ENCODE measurements at regions of chr6 and their contacts with region 1.

Region 1: GRCh38 chr6:69105288-69105687 is 470.2 kb downstream of the ADGRB3 start:
- DNase-seq: peak in 1 of 2 experiments; percentile 25
- H3K4me3 ChIP-seq: no peak overlapping the region
- H3K4me3 Mint-ChIP-seq: no peak overlapping the region
- H3K27ac Mint-ChIP-seq: peak overlapping the region; percentile 64
- H3K4me1 ChIP-seq: peaks cover 17% of the 10 kb centered on the region
- H3K4me1 Mint-ChIP-seq: peaks cover 7% of the 10 kb centered on the region
- H3K27me3 ChIP-seq: no peaks in the 10 kb centered on the region
- H3K27me3 Mint-ChIP-seq: no peaks in the 10 kb centered on the region
- CTCF ChIP-seq: no peak

Region 2: DNA sequence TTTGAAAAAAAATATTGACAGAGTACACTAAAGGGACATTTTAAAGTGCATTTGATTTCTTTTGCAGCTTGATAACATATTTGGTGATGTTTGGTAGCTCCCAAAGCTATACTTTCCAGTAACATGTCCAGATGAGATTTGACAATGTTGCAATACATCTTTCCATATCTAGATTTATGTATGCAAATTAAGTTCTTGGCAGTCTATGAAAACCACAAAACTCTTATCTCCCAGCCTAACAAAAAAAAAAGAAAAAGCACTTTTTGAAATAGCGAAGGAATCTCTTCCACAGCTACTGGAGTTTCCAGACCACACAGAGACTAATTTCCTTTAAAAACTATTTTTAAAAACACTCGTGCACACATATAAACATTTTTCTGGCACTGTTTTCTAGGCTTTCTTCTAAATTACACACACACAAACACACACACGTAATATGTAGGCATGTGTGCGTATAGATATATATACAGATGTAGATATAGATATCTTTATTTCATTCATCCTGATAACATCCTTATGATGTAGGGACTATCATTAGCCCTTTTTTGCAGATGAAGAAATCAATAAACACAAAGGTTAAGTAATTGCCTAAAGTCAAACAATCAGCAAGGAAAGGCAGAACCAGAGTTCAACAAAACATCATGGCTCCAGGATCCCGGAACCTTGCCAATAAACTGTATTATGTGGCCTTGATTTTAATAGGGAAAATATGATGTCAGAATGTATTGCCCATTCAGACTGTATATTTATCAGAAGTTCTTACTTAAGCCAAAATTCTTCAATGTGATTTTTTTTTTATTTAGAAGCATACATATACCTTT is 376.9 kb before region 1 on chr6:
- CTCF ChIA-PET with region 1: no interaction called
- POLR2A ChIA-PET with region 1: no interaction called
- intact Hi-C with region 1: no loop called
- DNase-seq: no peak
- H3K4me3 ChIP-seq: no peak overlapping the region
- H3K4me3 Mint-ChIP-seq: no peak overlapping the region
- H3K27ac Mint-ChIP-seq: no peak overlapping the region
- H3K4me1 ChIP-seq: no peaks in the 10 kb centered on the region
- H3K4me1 Mint-ChIP-seq: no peaks in the 10 kb centered on the region
- H3K27me3 ChIP-seq: no peaks in the 10 kb centered on the region
- H3K27me3 Mint-ChIP-seq: no peaks in the 10 kb centered on the region
- CTCF ChIP-seq: no peak

Region 3: DNA sequence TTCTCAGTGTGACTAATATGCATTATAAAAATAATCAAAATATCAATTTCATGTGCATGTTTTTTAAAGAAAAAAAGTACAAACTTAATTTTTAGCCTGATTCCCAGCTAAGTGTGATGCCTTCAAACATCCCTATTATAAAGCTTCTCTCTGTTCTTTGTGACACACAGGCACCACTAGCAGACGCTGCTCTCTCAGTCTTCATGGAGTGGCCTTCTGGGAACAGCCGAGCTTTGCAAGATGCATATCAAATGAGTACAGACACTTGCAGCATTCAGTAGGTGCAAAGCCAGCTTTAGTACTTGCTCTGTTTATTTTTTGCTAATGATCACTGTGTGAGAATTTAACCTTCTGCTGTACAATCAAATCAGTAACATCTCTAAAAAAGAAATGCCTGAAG is 130.2 kb before region 1 on chr6:
- CTCF ChIA-PET with region 1: interaction called, 17 read pairs
- POLR2A ChIA-PET with region 1: no interaction called
- intact Hi-C with region 1: loop called (anchors 1 kb)
- DNase-seq: peak; percentile 32 to 45
- H3K4me3 ChIP-seq: no peak overlapping the region
- H3K4me3 Mint-ChIP-seq: no peak overlapping the region
- H3K27ac Mint-ChIP-seq: no peak overlapping the region
- H3K4me1 ChIP-seq: no peaks in the 10 kb centered on the region; the same call in 1 of the 2 replicates
- H3K4me1 Mint-ChIP-seq: no peaks in the 10 kb centered on the region
- H3K27me3 ChIP-seq: no peaks in the 10 kb centered on the region
- H3K27me3 Mint-ChIP-seq: no peaks in the 10 kb centered on the region
- CTCF ChIP-seq: no peak

Region 4: GRCh38 chr6:68994521-68994920 is 110.8 kb before region 1 on chr6:
- CTCF ChIA-PET with region 1: no interaction called
- POLR2A ChIA-PET with region 1: no interaction called
- intact Hi-C with region 1: loop called (anchors 1 kb)
- DNase-seq: no peak
- H3K4me3 ChIP-seq: no peak overlapping the region
- H3K4me3 Mint-ChIP-seq: no peak overlapping the region
- H3K27ac Mint-ChIP-seq: no peak overlapping the region
- H3K4me1 ChIP-seq: peaks cover 47% of the 10 kb centered on the region
- H3K4me1 Mint-ChIP-seq: peaks cover 29% of the 10 kb centered on the region
- H3K27me3 ChIP-seq: no peaks in the 10 kb centered on the region
- H3K27me3 Mint-ChIP-seq: no peaks in the 10 kb centered on the region
- CTCF ChIP-seq: no peak

Region 5: DNA sequence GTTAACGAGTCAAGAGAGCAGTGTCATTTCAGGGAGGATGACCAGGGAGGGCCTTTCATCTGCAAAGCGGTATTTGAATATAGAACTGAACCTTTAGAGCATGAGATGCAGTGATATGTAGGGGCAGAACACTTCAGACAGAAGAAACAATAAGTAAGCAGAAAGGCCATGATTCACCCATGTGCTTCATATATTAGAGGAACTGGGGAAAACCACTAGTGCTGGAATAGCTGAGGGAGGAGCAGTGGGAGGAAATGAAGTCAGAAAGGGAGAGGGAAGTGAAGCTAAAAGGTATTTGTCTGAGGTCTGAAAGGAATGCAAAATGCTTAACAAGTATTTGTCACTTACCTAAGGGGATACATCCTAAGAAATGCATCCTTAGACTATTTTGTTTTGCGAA is 79.0 kb before region 1 on chr6:
- CTCF ChIA-PET with region 1: no interaction called
- POLR2A ChIA-PET with region 1: no interaction called
- intact Hi-C with region 1: no loop called
- DNase-seq: no peak
- H3K4me3 ChIP-seq: no peak overlapping the region
- H3K4me3 Mint-ChIP-seq: no peak overlapping the region
- H3K27ac Mint-ChIP-seq: no peak overlapping the region
- H3K4me1 ChIP-seq: no peaks in the 10 kb centered on the region
- H3K4me1 Mint-ChIP-seq: no peaks in the 10 kb centered on the region
- H3K27me3 ChIP-seq: no peaks in the 10 kb centered on the region
- H3K27me3 Mint-ChIP-seq: no peaks in the 10 kb centered on the region
- CTCF ChIP-seq: no peak

Measured in Caco-2 (cell line).